PC-9 (cell line): ENCODE measurements at regions of chr17 and their contacts with region 1.

Region 1: GRCh38 chr17:80454557-80455335 is 21.7 kb downstream of the NPTX1 start:
- DNase-seq: peak; percentile 78 to 96
- H3K4me3 ChIP-seq: peak overlapping the region; percentile 69
- H3K27ac ChIP-seq: peak overlapping the region; percentile 71
- H3K4me1 ChIP-seq: peaks cover 15% of the 10 kb centered on the region
- H3K27me3 ChIP-seq: no peaks in the 10 kb centered on the region
- CTCF ChIP-seq: no peak

Region 2: DNA sequence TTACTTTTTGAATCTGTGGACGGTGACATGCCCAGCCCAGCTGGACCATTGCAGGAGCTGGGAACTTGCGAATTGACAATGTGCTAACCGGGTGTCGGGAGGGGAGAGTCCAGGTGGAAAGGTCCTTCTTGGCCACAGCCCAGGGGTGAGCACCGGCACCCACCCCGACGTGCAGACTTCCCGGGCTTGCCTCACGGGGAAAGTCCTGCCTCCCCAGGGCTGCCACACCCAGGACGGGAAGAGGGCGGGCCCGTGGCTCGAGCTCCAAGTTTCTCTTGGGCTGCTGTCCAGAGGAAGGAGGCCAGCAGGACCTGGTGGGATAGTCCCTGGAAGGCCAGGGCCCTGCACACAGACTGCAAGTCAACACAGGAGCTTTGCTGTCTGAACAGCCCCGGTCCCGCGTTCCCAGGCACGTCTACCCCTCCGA is 267.2 kb before region 1 on chr17:
- CTCF ChIA-PET with region 1: no interaction called
- POLR2A ChIA-PET with region 1: no interaction called
- intact Hi-C with region 1: no loop called
- DNase-seq: peak in 1 of 2 experiments; percentile 59
- H3K4me3 ChIP-seq: no peak overlapping the region
- H3K27ac ChIP-seq: no peak overlapping the region
- H3K4me1 ChIP-seq: no peaks in the 10 kb centered on the region
- H3K27me3 ChIP-seq: no peaks in the 10 kb centered on the region
- CTCF ChIP-seq: no peak

Region 3: DNA sequence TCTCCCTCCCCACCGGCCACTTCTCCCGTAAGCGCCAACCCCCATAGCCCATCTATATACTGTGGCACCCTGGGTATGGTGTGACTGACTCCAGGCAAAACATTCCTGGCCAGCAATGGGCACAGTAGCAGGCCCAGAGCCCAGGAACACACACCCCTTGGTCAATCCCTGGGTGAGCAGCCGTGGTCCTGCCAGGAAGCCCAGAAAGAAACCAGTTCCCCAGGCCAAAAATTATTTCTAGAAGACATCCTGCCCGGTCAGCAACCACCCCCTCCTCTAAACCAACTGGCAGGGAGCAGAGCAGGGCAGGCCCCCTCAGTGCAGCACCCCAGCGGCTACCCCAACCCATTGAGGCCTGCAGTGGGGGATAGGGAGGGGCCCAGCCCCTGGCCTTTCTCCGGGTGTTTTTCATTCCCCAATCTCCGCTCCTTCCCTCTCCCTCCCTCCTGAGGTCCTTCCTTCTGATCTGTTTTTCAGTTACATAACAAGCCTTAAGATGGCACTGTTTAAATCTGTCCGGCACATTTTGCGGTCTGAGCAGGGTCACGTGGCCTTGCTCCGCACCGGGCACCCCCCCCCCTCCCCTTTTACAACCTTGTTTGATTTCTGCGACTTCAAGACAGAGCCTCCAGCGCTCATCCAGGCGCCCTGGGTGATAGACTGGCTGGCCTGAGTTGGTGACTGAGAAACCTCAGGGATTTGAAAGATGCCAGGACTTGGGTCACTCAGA is 19.6 kb after region 1 on chr17:
- CTCF ChIA-PET with region 1: no interaction called
- POLR2A ChIA-PET with region 1: interaction called, 11 read pairs
- intact Hi-C with region 1: no loop called
- DNase-seq: no peak
- H3K4me3 ChIP-seq: no peak overlapping the region; the same call in 1 of the 2 replicates
- H3K27ac ChIP-seq: no peak overlapping the region
- H3K4me1 ChIP-seq: 0 out of 2 replicates have a peak, but pooled peaks cover 9% of the 10 kb centered on the region
- H3K27me3 ChIP-seq: peaks cover 25% of the 10 kb centered on the region
- CTCF ChIP-seq: no peak

Region 4: GRCh38 chr17:80498242-80498919 is 43.6 kb after region 1 on chr17:
- CTCF ChIA-PET with region 1: no interaction called
- POLR2A ChIA-PET with region 1: no interaction called
- intact Hi-C with region 1: no loop called
- DNase-seq: no peak
- H3K4me3 ChIP-seq: no peak overlapping the region
- H3K27ac ChIP-seq: no peak overlapping the region
- H3K4me1 ChIP-seq: no peaks in the 10 kb centered on the region
- H3K27me3 ChIP-seq: peaks cover 5% of the 10 kb centered on the region; the same call in 1 of the 2 replicates
- CTCF ChIP-seq: no peak

Region 5: DNA sequence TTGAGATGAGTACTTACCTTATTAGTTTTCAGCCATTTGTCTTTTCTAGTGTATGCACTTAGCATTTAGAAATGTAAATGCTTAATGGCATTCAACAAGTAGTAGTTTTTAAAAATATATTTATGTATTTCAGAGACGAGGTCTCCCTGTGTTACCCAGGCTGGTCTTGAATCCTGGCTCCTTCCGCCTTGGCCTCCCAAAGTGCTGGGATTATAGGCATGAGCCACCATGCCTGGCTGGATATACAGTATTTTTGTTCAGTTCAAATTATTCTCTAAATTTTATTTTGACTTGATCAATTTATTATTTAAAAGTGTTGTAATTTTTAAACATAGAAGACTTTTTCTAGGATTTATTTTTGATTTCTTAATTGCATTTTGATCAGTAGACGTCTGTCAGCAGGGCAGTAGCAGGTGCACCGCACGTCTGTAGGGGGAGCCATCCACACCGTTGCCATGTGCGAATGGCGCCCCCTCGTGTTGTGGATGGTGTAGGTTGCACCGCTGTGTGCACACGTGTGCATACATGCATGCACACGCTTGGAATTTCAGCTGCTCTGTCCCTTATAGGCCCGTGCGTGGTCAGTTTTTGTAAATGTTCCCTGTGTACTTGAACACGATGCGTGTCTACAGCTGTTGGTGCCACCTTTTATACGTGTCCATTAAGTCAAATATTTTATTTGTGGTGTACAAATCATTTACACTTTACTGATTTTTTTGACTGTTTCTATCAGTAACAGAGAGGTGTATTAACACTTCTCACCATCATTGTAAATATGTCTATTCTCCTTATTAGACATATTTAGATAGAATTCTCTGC is 120.5 kb after region 1 on chr17:
- CTCF ChIA-PET with region 1: interaction called, 5 read pairs
- POLR2A ChIA-PET with region 1: no interaction called
- intact Hi-C with region 1: loop called (anchors 1 kb)
- DNase-seq: peak; percentile 66 to 87
- H3K4me3 ChIP-seq: no peak overlapping the region
- H3K27ac ChIP-seq: no peak overlapping the region
- H3K4me1 ChIP-seq: no peaks in the 10 kb centered on the region
- H3K27me3 ChIP-seq: no peaks in the 10 kb centered on the region
- CTCF ChIP-seq: peak; percentile 96

Region 6: GRCh38 chr17:80625627-80626026 is 170.9 kb after region 1 on chr17:
- CTCF ChIA-PET with region 1: no interaction called
- POLR2A ChIA-PET with region 1: interaction called, 10 read pairs
- intact Hi-C with region 1: no loop called
- DNase-seq: peak; percentile 43 to 89
- H3K4me3 ChIP-seq: no peak overlapping the region
- H3K27ac ChIP-seq: no peak overlapping the region
- H3K4me1 ChIP-seq: peaks cover 4% of the 10 kb centered on the region
- H3K27me3 ChIP-seq: no peaks in the 10 kb centered on the region
- CTCF ChIP-seq: no peak

Region 7: GRCh38 chr17:80940171-80941123 is 485.7 kb after region 1 on chr17:
- CTCF ChIA-PET with region 1: no interaction called
- POLR2A ChIA-PET with region 1: interaction called, 25 read pairs
- intact Hi-C with region 1: no loop called
- DNase-seq: no peak
- H3K4me3 ChIP-seq: no peak overlapping the region
- H3K27ac ChIP-seq: no peak overlapping the region
- H3K4me1 ChIP-seq: no peaks in the 10 kb centered on the region
- H3K27me3 ChIP-seq: no peaks in the 10 kb centered on the region
- CTCF ChIP-seq: no peak

Region 8: GRCh38 chr17:81507433-81508190 is 1052.9 kb after region 1 on chr17:
- CTCF ChIA-PET with region 1: no interaction called
- POLR2A ChIA-PET with region 1: interaction called, 11 read pairs
- intact Hi-C with region 1: no loop called
- DNase-seq: peak; percentile 44 to 59
- H3K4me3 ChIP-seq: no peak overlapping the region
- H3K27ac ChIP-seq: no peak overlapping the region
- H3K4me1 ChIP-seq: peaks cover 6% of the 10 kb centered on the region; the same call in 1 of the 2 replicates
- H3K27me3 ChIP-seq: no peaks in the 10 kb centered on the region
- CTCF ChIP-seq: no peak